ENCODE measurements at regions of chr21 and their contacts with region 1.

Region 1: GRCh38 chr21:15140321-15141019 is 75.7 kb upstream of the NRIP1 start:
- DNase-seq: peak; percentile 90 to 97
- H3K4me3 ChIP-seq: no peak overlapping the region
- H3K4me3 Mint-ChIP-seq: peak overlapping the region; percentile 58
- H3K27ac Mint-ChIP-seq: peak overlapping the region; percentile 85
- H3K4me1 ChIP-seq: peaks cover 49% of the 10 kb centered on the region
- H3K4me1 Mint-ChIP-seq: peaks cover 47% of the 10 kb centered on the region
- H3K27me3 ChIP-seq: no peaks in the 10 kb centered on the region
- H3K27me3 Mint-ChIP-seq: no peaks in the 10 kb centered on the region
- CTCF ChIP-seq: no peak

Region 2: GRCh38 chr21:14864211-14865021 is 276.1 kb before region 1 on chr21:
- CTCF ChIA-PET with region 1: interaction called, 3 read pairs
- POLR2A ChIA-PET with region 1: no interaction called
- intact Hi-C with region 1: loop called (anchors 1 kb)
- DNase-seq: peak; percentile 73 to 80
- H3K4me3 ChIP-seq: no peak overlapping the region
- H3K4me3 Mint-ChIP-seq: no peak overlapping the region
- H3K27ac Mint-ChIP-seq: no peak overlapping the region
- H3K4me1 ChIP-seq: peaks cover 23% of the 10 kb centered on the region
- H3K4me1 Mint-ChIP-seq: peaks cover 28% of the 10 kb centered on the region
- H3K27me3 ChIP-seq: no peaks in the 10 kb centered on the region
- H3K27me3 Mint-ChIP-seq: no peaks in the 10 kb centered on the region
- CTCF ChIP-seq: peak; percentile 42 to 47

Region 3: GRCh38 chr21:15064576-15065391 is 75.7 kb before region 1 on chr21 and contains the start of gene NRIP1:
- CTCF ChIA-PET with region 1: interaction called, 4 read pairs
- POLR2A ChIA-PET with region 1: interaction called, 3 read pairs
- intact Hi-C with region 1: loop called (anchors 1 kb)
- DNase-seq: peak; percentile 88 to 91
- H3K4me3 ChIP-seq: peak within 1 kb of the TSS; percentile 85
- H3K4me3 Mint-ChIP-seq: peak within 1 kb of the TSS; percentile 99
- H3K27ac Mint-ChIP-seq: peak within 1 kb of the TSS; percentile 96
- H3K4me1 ChIP-seq: peaks cover 22% of the 10 kb centered on the region
- H3K4me1 Mint-ChIP-seq: peaks cover 33% of the 10 kb centered on the region
- H3K27me3 ChIP-seq: no peaks in the 10 kb centered on the region
- H3K27me3 Mint-ChIP-seq: no peaks in the 10 kb centered on the region
- CTCF ChIP-seq: no peak
- total RNA-seq, gene NRIP1: 24.7 and 28.6 TPM in 2 replicates

Region 4: GRCh38 chr21:15112858-15113257 is 27.6 kb before region 1 on chr21:
- CTCF ChIA-PET with region 1: no interaction called
- POLR2A ChIA-PET with region 1: no interaction called
- intact Hi-C with region 1: no loop called
- DNase-seq: no peak
- H3K4me3 ChIP-seq: no peak overlapping the region
- H3K4me3 Mint-ChIP-seq: no peak overlapping the region
- H3K27ac Mint-ChIP-seq: no peak overlapping the region
- H3K4me1 ChIP-seq: no peaks in the 10 kb centered on the region
- H3K4me1 Mint-ChIP-seq: no peaks in the 10 kb centered on the region
- H3K27me3 ChIP-seq: no peaks in the 10 kb centered on the region
- H3K27me3 Mint-ChIP-seq: no peaks in the 10 kb centered on the region
- CTCF ChIP-seq: no peak

Region 5: DNA sequence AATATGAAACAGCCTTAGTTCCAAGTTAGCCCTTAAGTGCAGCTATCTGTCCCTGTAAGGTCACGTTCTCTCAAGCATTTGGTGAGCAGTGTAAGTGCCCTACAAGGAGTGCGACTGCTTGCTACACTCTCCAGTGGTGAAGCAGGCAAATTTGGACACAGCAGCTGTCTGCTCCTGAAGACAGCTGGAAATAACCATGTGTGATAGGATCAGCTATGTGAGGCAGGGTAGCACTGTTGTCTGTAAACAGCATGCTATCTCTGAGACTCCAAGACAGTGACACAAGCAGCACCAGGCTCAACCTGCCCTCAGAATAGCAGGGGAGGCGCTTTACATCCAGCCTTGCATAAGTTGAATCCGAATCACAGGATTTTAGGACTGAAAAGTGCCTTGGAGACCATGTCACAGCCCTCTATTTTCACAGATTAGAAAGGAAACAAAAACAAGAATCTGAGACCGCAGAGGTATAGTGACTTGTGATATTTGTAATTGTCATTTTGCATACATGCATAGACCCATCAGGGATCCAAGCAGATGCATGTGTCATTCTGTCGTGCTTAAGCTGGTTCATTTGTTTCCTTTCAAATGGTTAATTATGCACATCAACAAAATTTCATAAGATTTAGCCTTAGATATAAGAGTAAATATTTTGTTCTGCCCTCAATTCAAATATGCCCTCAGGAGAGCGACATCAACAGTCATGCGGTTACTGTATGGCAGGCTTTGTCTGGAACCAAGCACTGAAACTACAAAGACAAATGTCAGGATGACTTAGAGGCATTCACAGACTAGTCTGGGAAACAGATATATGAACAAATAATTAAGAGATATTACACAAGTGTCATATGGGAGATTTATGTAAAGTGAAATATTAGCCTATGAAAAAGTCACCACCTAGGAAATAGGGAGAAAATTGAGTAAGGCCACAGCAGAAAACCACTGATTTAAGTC is 59.2 kb after region 1 on chr21:
- CTCF ChIA-PET with region 1: no interaction called
- POLR2A ChIA-PET with region 1: no interaction called
- intact Hi-C with region 1: loop called (anchors 5 kb)
- DNase-seq: no peak
- H3K4me3 ChIP-seq: no peak overlapping the region
- H3K4me3 Mint-ChIP-seq: no peak overlapping the region
- H3K27ac Mint-ChIP-seq: no peak overlapping the region
- H3K4me1 ChIP-seq: peaks cover 30% of the 10 kb centered on the region
- H3K4me1 Mint-ChIP-seq: peaks cover 10% of the 10 kb centered on the region
- H3K27me3 ChIP-seq: no peaks in the 10 kb centered on the region
- H3K27me3 Mint-ChIP-seq: no peaks in the 10 kb centered on the region
- CTCF ChIP-seq: no peak

Region 6: GRCh38 chr21:15264084-15264665 is 123.7 kb after region 1 on chr21:
- CTCF ChIA-PET with region 1: no interaction called
- POLR2A ChIA-PET with region 1: no interaction called
- intact Hi-C with region 1: no loop called
- DNase-seq: no peak
- H3K4me3 ChIP-seq: no peak overlapping the region
- H3K4me3 Mint-ChIP-seq: no peak overlapping the region
- H3K27ac Mint-ChIP-seq: no peak overlapping the region
- H3K4me1 ChIP-seq: no peaks in the 10 kb centered on the region
- H3K4me1 Mint-ChIP-seq: no peaks in the 10 kb centered on the region
- H3K27me3 ChIP-seq: no peaks in the 10 kb centered on the region
- H3K27me3 Mint-ChIP-seq: no peaks in the 10 kb centered on the region
- CTCF ChIP-seq: no peak

Region 7: GRCh38 chr21:15326032-15326867 is 185.8 kb after region 1 on chr21:
- CTCF ChIA-PET with region 1: no interaction called
- POLR2A ChIA-PET with region 1: no interaction called
- intact Hi-C with region 1: no loop called
- DNase-seq: no peak
- H3K4me3 ChIP-seq: no peak overlapping the region
- H3K4me3 Mint-ChIP-seq: no peak overlapping the region
- H3K27ac Mint-ChIP-seq: no peak overlapping the region
- H3K4me1 ChIP-seq: no peaks in the 10 kb centered on the region
- H3K4me1 Mint-ChIP-seq: no peaks in the 10 kb centered on the region
- H3K27me3 ChIP-seq: no peaks in the 10 kb centered on the region
- H3K27me3 Mint-ChIP-seq: no peaks in the 10 kb centered on the region
- CTCF ChIP-seq: no peak

Region 8: GRCh38 chr21:15444118-15444960 is 303.9 kb after region 1 on chr21:
- CTCF ChIA-PET with region 1: no interaction called
- POLR2A ChIA-PET with region 1: no interaction called
- intact Hi-C with region 1: loop called (anchors 5 kb)
- DNase-seq: peak; percentile 69 to 76
- H3K4me3 ChIP-seq: no peak overlapping the region
- H3K4me3 Mint-ChIP-seq: no peak overlapping the region
- H3K27ac Mint-ChIP-seq: peak overlapping the region; percentile 29
- H3K4me1 ChIP-seq: peaks cover 39% of the 10 kb centered on the region
- H3K4me1 Mint-ChIP-seq: peaks cover 28% of the 10 kb centered on the region
- H3K27me3 ChIP-seq: no peaks in the 10 kb centered on the region
- H3K27me3 Mint-ChIP-seq: no peaks in the 10 kb centered on the region
- CTCF ChIP-seq: no peak

Region 9: GRCh38 chr21:15472108-15473040 is 331.9 kb after region 1 on chr21:
- CTCF ChIA-PET with region 1: no interaction called
- POLR2A ChIA-PET with region 1: no interaction called
- intact Hi-C with region 1: no loop called
- DNase-seq: no peak
- H3K4me3 ChIP-seq: no peak overlapping the region
- H3K4me3 Mint-ChIP-seq: no peak overlapping the region
- H3K27ac Mint-ChIP-seq: no peak overlapping the region
- H3K4me1 ChIP-seq: no peaks in the 10 kb centered on the region
- H3K4me1 Mint-ChIP-seq: no peaks in the 10 kb centered on the region
- H3K27me3 ChIP-seq: no peaks in the 10 kb centered on the region
- H3K27me3 Mint-ChIP-seq: no peaks in the 10 kb centered on the region
- CTCF ChIP-seq: no peak

Measured in Caco-2 (cell line).